Activated CD4-positive, alpha-beta T cell treated with anti-CD3 and anti-CD28 coated beads for 36 hours (primary cell): ENCODE measurements at regions of chr20 and their contacts with region 1.

Region 1: DNA sequence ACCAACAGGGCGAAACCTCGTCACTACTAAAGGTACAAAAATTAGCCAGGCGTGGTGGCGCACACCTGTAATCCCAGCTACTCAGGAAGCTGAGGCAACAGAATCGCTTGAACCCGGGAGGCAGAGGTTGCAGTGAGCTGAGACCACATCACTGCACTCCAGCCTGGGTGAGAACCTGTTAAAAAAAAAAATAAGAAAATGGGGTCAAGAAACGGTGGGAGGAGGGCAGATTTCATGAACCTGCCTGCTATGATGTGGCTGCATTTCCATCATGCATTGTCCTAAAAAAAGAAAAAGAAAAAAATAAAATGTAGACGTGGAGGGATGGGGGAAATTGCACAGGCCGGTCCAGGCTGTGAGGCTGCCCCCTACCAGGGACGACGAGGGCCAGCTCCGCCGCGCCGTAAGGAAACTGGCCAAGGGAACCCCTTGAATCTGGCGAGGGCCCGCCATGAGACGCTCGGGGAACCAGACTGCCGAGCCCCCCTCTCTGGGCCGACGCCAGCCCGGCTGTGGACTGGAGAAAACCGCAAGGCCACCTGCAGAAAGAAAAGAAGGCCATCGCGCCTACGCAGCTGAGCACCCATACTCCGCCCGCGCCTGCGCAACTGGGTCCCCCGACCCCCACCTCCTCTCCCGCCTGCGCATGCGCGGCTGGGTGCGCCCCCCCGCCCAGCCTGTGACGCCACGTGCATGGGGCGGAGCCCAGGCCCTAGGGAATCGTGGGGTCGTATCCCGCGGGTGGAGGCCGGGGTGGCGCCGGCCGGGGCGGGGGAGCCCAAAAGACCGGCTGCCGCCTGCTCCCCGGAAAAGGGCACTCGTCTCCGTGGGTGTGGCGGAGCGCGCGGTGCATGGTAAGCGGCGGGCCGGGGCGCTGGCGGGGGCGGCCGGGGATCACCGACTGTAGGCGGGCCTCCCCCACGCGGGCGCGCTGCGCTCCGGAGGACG is at the start of gene ENTPD6:
- DNase-seq: peak; percentile 94
- ATAC-seq: peak; percentile 86
- H3K4me3 Mint-ChIP-seq: peak within 1 kb of the TSS; percentile 84
- H3K27ac Mint-ChIP-seq: peak within 1 kb of the TSS; percentile 85
- H3K4me1 Mint-ChIP-seq: peaks cover 39% of the 10 kb centered on the region
- H3K27me3 Mint-ChIP-seq: no peaks in the 10 kb centered on the region
- total RNA-seq, gene ENTPD6: 34.3 to 41.5 TPM

Region 2: GRCh38 chr20:25076731-25077609 is 118.3 kb before region 1 on chr20:
- CTCF ChIA-PET with region 1: no interaction called
- POLR2A ChIA-PET with region 1: no interaction called
- intact Hi-C with region 1: loop called in 1 of 2 experiments (anchors 5 kb)
- DNase-seq: peak; percentile 61
- ATAC-seq: peak; percentile 62
- H3K4me3 Mint-ChIP-seq: peak overlapping the region; percentile 32
- H3K27ac Mint-ChIP-seq: no peak overlapping the region
- H3K4me1 Mint-ChIP-seq: peaks cover 14% of the 10 kb centered on the region
- H3K27me3 Mint-ChIP-seq: peaks cover 59% of the 10 kb centered on the region

Region 3: GRCh38 chr20:25211273-25211672 is 16.0 kb after region 1 on chr20:
- CTCF ChIA-PET with region 1: no interaction called
- POLR2A ChIA-PET with region 1: interaction called, 4 read pairs
- intact Hi-C with region 1: loop called in 1 of 2 experiments (anchors 1 kb)
- DNase-seq: no peak
- ATAC-seq: no peak
- H3K4me3 Mint-ChIP-seq: no peak overlapping the region
- H3K27ac Mint-ChIP-seq: no peak overlapping the region
- H3K4me1 Mint-ChIP-seq: no peaks in the 10 kb centered on the region
- H3K27me3 Mint-ChIP-seq: no peaks in the 10 kb centered on the region

Region 4: GRCh38 chr20:25227317-25227831 is 32.1 kb after region 1 on chr20:
- CTCF ChIA-PET with region 1: no interaction called
- POLR2A ChIA-PET with region 1: no interaction called
- intact Hi-C with region 1: no loop called
- DNase-seq: no peak
- ATAC-seq: no peak
- H3K4me3 Mint-ChIP-seq: no peak overlapping the region
- H3K27ac Mint-ChIP-seq: no peak overlapping the region
- H3K4me1 Mint-ChIP-seq: peaks cover 7% of the 10 kb centered on the region
- H3K27me3 Mint-ChIP-seq: no peaks in the 10 kb centered on the region

Region 5: DNA sequence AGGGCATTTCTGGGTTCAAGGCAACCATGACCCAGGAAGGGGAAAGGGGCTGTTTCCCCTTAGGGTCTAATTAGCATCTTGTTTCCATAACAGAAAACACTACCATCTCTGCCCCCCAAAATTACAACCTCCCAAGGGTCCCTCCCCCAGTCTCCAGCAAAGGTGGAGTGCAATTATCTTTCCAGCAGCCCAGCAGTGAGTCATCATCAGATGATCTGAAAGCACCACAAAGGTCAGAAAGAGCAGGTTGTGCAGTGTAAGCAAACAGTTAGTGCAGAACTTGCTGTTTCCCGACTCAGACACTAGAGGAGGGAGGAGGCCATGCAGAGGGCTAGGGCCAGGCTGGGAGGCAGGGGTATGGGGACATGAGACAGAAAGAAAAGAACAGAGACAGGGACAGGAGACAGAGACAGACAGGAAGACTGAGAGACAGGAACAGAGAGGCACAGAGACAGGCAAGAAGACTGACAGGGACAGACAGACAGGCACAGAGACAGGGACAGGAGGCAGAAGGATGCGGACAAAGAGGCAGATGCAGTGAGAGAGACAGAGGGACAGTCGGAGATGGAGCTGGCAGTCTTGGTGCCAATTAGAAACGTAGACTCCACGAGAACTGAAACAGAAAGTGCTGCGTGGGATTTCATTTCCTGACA is 115.1 kb after region 1 on chr20:
- CTCF ChIA-PET with region 1: no interaction called
- POLR2A ChIA-PET with region 1: no interaction called
- intact Hi-C with region 1: loop called in 1 of 2 experiments (anchors 1 kb)
- DNase-seq: peak; percentile 79
- ATAC-seq: peak; percentile 97
- H3K4me3 Mint-ChIP-seq: peak overlapping the region; percentile 59
- H3K27ac Mint-ChIP-seq: peak overlapping the region; percentile 94
- H3K4me1 Mint-ChIP-seq: peaks cover 35% of the 10 kb centered on the region
- H3K27me3 Mint-ChIP-seq: no peaks in the 10 kb centered on the region

Region 6: DNA sequence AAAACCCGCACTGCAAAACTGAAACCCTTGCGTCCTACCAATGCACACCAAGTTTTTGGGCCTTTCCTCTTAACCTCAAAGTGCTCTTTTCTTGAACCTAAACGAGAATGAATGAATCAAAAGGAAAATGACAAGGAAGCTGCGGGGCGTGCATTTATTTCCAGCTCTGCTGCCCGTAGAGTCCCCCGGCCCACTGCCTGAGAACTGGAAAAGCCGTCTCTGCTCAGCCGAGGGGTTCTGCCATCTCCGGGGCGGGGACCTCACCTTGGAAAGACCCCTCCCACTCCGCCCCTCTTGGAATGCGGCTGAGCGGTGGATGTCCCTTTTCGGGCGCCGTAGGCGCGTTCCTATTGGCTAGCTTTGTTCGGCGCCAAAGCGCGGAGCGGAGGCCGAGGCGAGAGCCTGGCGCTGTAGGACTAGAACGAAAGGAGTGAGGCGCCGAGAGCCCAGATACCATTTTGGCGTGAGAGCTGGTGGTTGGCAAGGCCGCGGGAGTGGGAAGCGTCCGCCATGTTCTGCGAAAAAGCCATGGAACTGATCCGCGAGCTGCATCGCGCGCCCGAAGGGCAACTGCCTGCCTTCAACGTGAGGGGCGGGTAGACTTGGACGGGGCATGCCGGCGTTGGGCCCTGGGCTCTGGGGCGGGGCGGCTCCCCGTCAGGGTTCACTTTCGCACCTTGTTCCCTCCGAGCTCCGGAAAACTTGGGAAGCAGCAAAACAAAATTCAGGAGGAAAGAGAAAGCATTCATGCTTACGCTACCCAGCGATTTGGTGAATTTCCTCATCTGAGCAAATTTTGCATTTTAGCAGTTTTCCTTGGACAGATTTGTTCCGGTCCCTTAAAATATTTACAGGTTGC is 212.3 kb after region 1 on chr20 and contains the start of gene GINS1:
- CTCF ChIA-PET with region 1: no interaction called
- POLR2A ChIA-PET with region 1: interaction called, 3 read pairs
- intact Hi-C with region 1: loop called in 1 of 2 experiments (anchors 2 kb)
- DNase-seq: peak; percentile 92
- ATAC-seq: peak; percentile 92
- H3K4me3 Mint-ChIP-seq: peak within 1 kb of the TSS; percentile 78
- H3K27ac Mint-ChIP-seq: peak within 1 kb of the TSS; percentile 94
- H3K4me1 Mint-ChIP-seq: peaks cover 16% of the 10 kb centered on the region
- H3K27me3 Mint-ChIP-seq: no peaks in the 10 kb centered on the region
- total RNA-seq, gene GINS1: 24.6 to 32.7 TPM